ENCODE measurements at regions of chr15 and their contacts with region 1.

Region 1: GRCh38 chr15:78195735-78196201 is 38.6 kb downstream of the ACSBG1 start:
- DNase-seq: peak; percentile 60
- H3K4me3 Mint-ChIP-seq: no peak overlapping the region
- H3K27ac Mint-ChIP-seq: no peak overlapping the region
- H3K4me1 Mint-ChIP-seq: no peaks in the 10 kb centered on the region
- H3K27me3 Mint-ChIP-seq: no peaks in the 10 kb centered on the region

Region 2: GRCh38 chr15:77768107-77768506 is 427.7 kb before region 1 on chr15:
- CTCF ChIA-PET with region 1: no interaction called
- POLR2A ChIA-PET with region 1: no interaction called
- intact Hi-C with region 1: no loop called
- DNase-seq: no peak
- H3K4me3 Mint-ChIP-seq: no peak overlapping the region
- H3K27ac Mint-ChIP-seq: no peak overlapping the region
- H3K4me1 Mint-ChIP-seq: no peaks in the 10 kb centered on the region
- H3K27me3 Mint-ChIP-seq: peaks cover 10% of the 10 kb centered on the region

Region 3: DNA sequence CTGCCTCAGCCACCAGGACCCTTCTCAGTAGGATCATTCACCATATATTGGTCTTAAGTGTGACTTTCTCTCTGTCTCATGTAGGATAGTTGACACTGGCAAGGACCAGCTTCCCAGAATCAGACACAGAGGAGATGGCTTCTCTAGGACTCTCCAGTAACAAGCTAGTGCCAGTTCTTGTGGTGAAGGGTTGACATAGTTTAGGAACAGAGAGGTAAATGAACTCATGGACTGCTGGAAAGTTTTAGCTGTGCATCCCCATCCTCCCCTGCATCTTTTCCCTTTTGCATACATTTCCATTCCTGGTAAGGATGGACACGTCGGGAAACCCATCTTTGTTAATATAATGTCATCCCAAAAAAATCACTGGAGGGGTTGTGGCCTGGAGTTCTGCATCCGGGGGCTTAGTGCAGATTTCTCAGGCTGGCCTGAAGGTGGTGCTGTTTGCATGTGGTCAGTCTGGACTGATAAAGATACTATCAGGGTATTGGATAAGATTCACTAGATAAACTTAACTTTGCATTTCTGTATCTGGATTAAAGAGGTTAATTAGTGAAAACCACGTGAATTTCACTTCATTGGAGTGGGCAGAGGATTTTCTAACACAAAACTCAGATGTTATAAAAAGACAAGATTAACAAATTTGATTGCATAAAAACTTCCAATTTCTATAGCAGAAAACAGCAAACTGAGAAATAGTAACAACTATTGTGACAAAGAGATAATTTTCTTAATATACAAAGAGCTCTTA is 229.1 kb before region 1 on chr15:
- CTCF ChIA-PET with region 1: interaction called, 10 read pairs
- POLR2A ChIA-PET with region 1: no interaction called
- intact Hi-C with region 1: no loop called
- DNase-seq: peak; percentile 67
- H3K4me3 Mint-ChIP-seq: no peak overlapping the region
- H3K27ac Mint-ChIP-seq: no peak overlapping the region
- H3K4me1 Mint-ChIP-seq: no peaks in the 10 kb centered on the region
- H3K27me3 Mint-ChIP-seq: peaks cover 3% of the 10 kb centered on the region

Region 4: GRCh38 chr15:78044407-78045155 is 151.2 kb before region 1 on chr15:
- CTCF ChIA-PET with region 1: no interaction called
- POLR2A ChIA-PET with region 1: no interaction called
- intact Hi-C with region 1: no loop called
- DNase-seq: peak; percentile 55
- H3K4me3 Mint-ChIP-seq: no peak overlapping the region
- H3K27ac Mint-ChIP-seq: peak overlapping the region; percentile 80
- H3K4me1 Mint-ChIP-seq: peaks cover 90% of the 10 kb centered on the region
- H3K27me3 Mint-ChIP-seq: no peaks in the 10 kb centered on the region

Region 5: GRCh38 chr15:78131295-78132061 is 64.3 kb before region 1 on chr15 and contains the start of gene CIB2:
- CTCF ChIA-PET with region 1: interaction called, 61 read pairs
- POLR2A ChIA-PET with region 1: interaction called, 4 read pairs
- intact Hi-C with region 1: loop called (anchors 1 kb)
- DNase-seq: peak; percentile 83
- H3K4me3 Mint-ChIP-seq: peak within 1 kb of the TSS; percentile 73
- H3K27ac Mint-ChIP-seq: peak within 1 kb of the TSS; percentile 11
- H3K4me1 Mint-ChIP-seq: peaks cover 21% of the 10 kb centered on the region
- H3K27me3 Mint-ChIP-seq: no peaks in the 10 kb centered on the region
- total RNA-seq, gene CIB2: 2.0 to 2.2 TPM

Region 6: DNA sequence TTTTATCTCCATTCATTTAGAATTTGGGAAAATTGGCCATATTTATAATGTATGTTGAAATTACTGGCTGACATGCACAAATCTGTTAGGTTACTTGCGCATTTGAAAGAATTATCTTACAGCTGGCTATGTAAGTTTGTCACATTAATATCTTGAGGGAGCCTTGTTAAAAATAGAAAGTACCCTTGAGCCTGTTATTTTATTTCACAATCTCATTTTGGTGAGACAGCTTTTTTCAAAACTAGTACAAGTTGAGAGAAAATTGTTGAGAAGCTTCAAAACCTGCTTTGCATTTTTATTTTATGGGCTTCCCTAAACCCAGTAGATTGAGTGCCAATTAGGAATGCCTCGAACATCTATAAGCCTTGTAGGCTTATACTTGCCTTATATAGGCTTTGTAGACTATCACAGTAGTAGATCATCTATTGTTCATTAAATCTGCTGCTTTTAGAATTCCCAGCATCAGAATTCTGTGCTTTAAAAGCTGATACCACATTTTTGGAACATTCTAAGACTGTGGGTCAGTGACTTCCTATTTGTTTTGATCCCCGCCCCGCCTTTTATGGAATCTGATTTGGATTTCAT is 40.3 kb before region 1 on chr15:
- CTCF ChIA-PET with region 1: interaction called, 10 read pairs
- POLR2A ChIA-PET with region 1: no interaction called
- intact Hi-C with region 1: no loop called
- DNase-seq: no peak
- H3K4me3 Mint-ChIP-seq: no peak overlapping the region
- H3K27ac Mint-ChIP-seq: no peak overlapping the region
- H3K4me1 Mint-ChIP-seq: peaks cover 24% of the 10 kb centered on the region
- H3K27me3 Mint-ChIP-seq: no peaks in the 10 kb centered on the region

Region 7: GRCh38 chr15:78182821-78183220 is 12.9 kb before region 1 on chr15:
- CTCF ChIA-PET with region 1: interaction called, 18 read pairs
- POLR2A ChIA-PET with region 1: no interaction called
- intact Hi-C with region 1: no loop called
- DNase-seq: no peak
- H3K4me3 Mint-ChIP-seq: no peak overlapping the region
- H3K27ac Mint-ChIP-seq: no peak overlapping the region
- H3K4me1 Mint-ChIP-seq: no peaks in the 10 kb centered on the region
- H3K27me3 Mint-ChIP-seq: no peaks in the 10 kb centered on the region

Region 8: GRCh38 chr15:78241007-78241406 is 45.2 kb after region 1 on chr15:
- CTCF ChIA-PET with region 1: interaction called, 49 read pairs
- POLR2A ChIA-PET with region 1: no interaction called
- intact Hi-C with region 1: loop called (anchors 5 kb)
- DNase-seq: peak; percentile 91
- H3K4me3 Mint-ChIP-seq: no peak overlapping the region
- H3K27ac Mint-ChIP-seq: no peak overlapping the region
- H3K4me1 Mint-ChIP-seq: peaks cover 2% of the 10 kb centered on the region
- H3K27me3 Mint-ChIP-seq: peaks cover 1% of the 10 kb centered on the region